Right lobe of liver (tissue), 6 donors: ENCODE measurements at regions of chr13 and their contacts with region 1.

Region 1: DNA sequence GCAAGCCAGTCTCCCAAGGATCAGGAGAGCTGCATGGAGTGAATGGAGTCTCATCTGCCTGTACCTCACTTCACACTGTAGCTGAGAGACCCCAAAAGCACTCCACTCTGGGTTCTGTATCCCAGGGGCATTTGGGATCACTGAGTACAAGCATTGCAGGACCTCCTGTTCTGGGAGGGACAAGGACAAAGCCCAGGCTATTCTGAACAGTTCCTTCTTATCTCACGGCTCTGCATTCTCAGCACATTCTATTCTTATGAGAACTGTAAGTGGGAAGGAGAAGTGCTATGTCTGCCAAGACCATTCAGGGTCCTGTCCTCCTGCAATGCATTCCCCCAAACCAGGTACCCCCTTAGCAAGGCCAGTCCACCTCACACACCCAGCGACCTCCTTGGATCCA is 42.8 kb downstream of the RNF6 start:
- DNase-seq: no peak
- ATAC-seq: no peak
- H3K4me3 ChIP-seq: no peak overlapping the region
- H3K27ac ChIP-seq: no peak overlapping the region
- H3K4me1 ChIP-seq: no peaks in the 10 kb centered on the region
- H3K27me3 ChIP-seq: no peaks in the 10 kb centered on the region
- CTCF ChIP-seq: no peak
- POLR2A ChIP-seq: no peak

Region 2: GRCh38 chr13:26482451-26483197 is 303.3 kb after region 1 on chr13:
- intact Hi-C with region 1: loop called in 1 of 2 experiments (anchors 10 kb)
- DNase-seq: peak in 1 of 3 donors; percentile 64
- ATAC-seq: peak; percentile 85 to 96 (median 92)
- H3K4me3 ChIP-seq: peak overlapping the region; percentile 28 to 31 (median 29)
- H3K27ac ChIP-seq: no peak overlapping the region
- H3K4me1 ChIP-seq: no peaks in the 10 kb centered on the region
- H3K27me3 ChIP-seq: no peaks in the 10 kb centered on the region
- CTCF ChIP-seq: peak; percentile 84 to 91 (median 88)
- POLR2A ChIP-seq: no peak

Region 3: GRCh38 chr13:26498656-26499591 is 319.6 kb after region 1 on chr13:
- intact Hi-C with region 1: loop called in 1 of 2 experiments (anchors 5 kb)
- DNase-seq: no peak
- ATAC-seq: no peak
- H3K4me3 ChIP-seq: no peak overlapping the region
- H3K27ac ChIP-seq: no peak overlapping the region
- H3K4me1 ChIP-seq: no peaks in the 10 kb centered on the region
- H3K27me3 ChIP-seq: no peaks in the 10 kb centered on the region
- CTCF ChIP-seq: no peak
- POLR2A ChIP-seq: no peak

Region 4: DNA sequence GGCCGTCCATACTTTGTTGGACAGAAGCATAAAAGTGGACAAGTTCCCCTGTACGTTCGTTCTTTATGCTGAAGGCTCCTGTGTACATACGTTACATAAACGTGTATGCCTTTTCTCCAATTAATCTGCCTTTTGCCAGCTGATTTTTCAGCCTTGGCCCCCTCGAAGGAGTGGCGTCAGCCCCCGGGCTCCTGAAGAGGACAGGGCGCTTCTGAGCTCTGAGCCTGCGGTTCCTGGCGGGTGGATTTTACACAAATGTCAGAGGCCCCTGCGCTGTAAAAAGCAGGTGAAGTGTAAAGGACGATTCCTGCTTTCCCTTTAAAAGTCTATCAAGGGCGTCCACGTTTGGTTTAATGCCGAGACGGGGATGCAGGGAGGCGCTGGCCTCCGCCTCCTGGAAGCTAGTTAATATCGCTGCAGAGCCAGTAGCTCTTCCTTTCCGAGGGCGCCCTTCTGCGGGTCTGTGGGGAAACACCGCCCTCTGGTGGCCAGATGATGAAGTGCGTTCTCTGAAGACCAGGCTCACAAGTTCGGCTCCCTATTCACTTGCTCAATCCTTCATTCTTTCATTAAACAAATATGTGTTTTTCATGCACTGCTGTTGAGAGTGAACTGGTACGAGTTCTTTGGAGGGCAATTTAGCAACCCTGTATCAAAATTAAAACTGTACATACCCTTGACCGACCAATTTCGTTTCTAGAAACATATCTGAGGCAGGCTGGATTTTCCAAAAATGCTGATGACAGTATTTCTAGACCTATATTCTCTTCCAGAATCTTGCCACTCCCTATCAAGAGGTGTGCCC is 519.2 kb after region 1 on chr13:
- intact Hi-C with region 1: loop called in 1 of 2 experiments (anchors 10 kb)
- DNase-seq: peak; percentile 74 to 87 (median 83)
- ATAC-seq: peak; percentile 97 to 99 (median 99)
- H3K4me3 ChIP-seq: no peak overlapping the region
- H3K27ac ChIP-seq: no peak overlapping the region
- H3K4me1 ChIP-seq: peaks cover 0 to 5% (median 0%) of the 10 kb centered on the region in 4 donors
- H3K27me3 ChIP-seq: no peaks in the 10 kb centered on the region
- CTCF ChIP-seq: peak; percentile 97 to 99 (median 98)
- POLR2A ChIP-seq: no peak

Region 5: GRCh38 chr13:27086599-27087265 is 907.4 kb after region 1 on chr13:
- intact Hi-C with region 1: no loop called
- DNase-seq: no peak
- ATAC-seq: no peak
- H3K4me3 ChIP-seq: no peak overlapping the region
- H3K27ac ChIP-seq: no peak overlapping the region
- H3K4me1 ChIP-seq: peaks cover 0 to 6% (median 0%) of the 10 kb centered on the region in 4 donors
- H3K27me3 ChIP-seq: no peaks in the 10 kb centered on the region
- CTCF ChIP-seq: no peak
- POLR2A ChIP-seq: no peak